ENCODE measurements at regions of chr6 and their contacts with region 1.

Region 1: GRCh38 chr6:158972241-158973233 is 27.5 kb downstream of the RSPH3 start:
- DNase-seq: no peak
- ATAC-seq: peak; percentile 72

Region 2: DNA sequence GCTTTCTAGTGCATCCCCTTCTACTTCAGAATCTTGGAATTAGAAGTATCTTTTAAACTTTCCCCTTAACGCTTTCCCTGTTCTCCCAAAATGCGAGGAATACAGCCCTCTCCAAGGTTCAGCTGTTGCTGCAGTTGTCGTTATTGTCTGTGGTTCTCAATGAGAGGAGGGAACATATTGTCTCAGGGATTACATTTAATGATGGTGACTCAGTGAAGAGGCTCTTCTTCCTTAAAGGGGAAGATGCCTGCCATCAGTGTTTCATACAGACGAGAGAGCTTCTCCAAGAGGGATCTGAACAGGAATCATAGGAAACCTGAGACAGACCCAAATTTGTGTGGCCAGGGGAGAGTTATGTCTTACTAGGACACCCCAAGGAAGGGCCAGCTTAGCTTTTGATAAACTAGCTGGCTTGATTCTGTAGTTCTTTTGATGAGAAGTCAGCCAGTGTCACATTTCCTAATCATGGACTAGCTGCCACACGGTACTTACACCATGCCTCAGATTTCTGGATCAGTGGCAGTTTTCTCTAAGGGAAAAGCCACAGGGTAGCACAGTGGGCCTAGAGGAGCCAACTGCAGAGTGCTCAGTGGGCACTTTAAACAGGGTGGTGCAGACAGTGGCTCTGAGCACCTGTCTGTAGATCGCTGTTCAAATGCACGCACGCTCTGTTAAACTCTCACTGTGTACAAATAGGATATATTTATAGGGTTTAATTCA is 472.4 kb before region 1 on chr6:
- intact Hi-C with region 1: no loop called
- DNase-seq: no peak
- ATAC-seq: no peak

Region 3: GRCh38 chr6:158789434-158789917 is 183.1 kb before region 1 on chr6:
- intact Hi-C with region 1: loop called (anchors 10 kb)
- DNase-seq: no peak
- ATAC-seq: no peak

Region 4: GRCh38 chr6:159042003-159042825 is 69.7 kb after region 1 on chr6:
- intact Hi-C with region 1: no loop called
- DNase-seq: peak; percentile 49
- ATAC-seq: peak; percentile 82

Region 5: GRCh38 chr6:159084493-159085091 is 112.1 kb after region 1 on chr6:
- intact Hi-C with region 1: no loop called
- DNase-seq: no peak
- ATAC-seq: no peak

Region 6: DNA sequence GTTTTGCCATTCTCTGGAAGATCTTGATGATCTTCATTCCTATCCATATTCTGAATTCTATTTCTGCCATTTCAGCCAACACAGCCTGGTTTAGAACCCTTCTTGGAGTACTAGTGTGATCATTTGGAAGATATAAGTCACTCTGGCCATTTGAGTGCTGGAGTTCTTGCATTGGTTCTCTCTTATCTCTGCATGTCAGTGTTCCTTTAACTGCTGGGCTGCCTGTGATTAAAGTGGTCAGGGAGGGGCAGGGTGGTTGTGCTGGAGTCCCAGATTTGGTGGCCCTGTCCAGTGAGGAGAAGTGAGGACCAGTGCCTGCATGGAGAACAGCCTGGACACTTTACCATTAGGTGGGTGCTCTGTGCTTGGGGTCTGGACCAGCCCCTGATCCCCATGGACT is 547.5 kb after region 1 on chr6:
- intact Hi-C with region 1: no loop called
- DNase-seq: no peak
- ATAC-seq: no peak